ENCODE measurements at regions of chr10 and their contacts with region 1.

Region 1: GRCh38 chr10:46556515-46557315 is at the start of gene GPRIN2:
- DNase-seq: no peak
- H3K4me3 ChIP-seq: peak within 1 kb of the TSS; percentile 18
- CTCF ChIP-seq: no peak

Region 2: GRCh38 chr10:46525177-46525823 is 31.4 kb before region 1 on chr10:
- CTCF ChIA-PET with region 1: no interaction called
- POLR2A ChIA-PET with region 1: no interaction called
- DNase-seq: peak; percentile 42
- H3K4me3 ChIP-seq: no peak overlapping the region
- CTCF ChIP-seq: no peak

Region 3: GRCh38 chr10:46544989-46545791 is 11.5 kb before region 1 on chr10:
- CTCF ChIA-PET with region 1: interaction called, 20 read pairs
- POLR2A ChIA-PET with region 1: no interaction called
- DNase-seq: no peak
- H3K4me3 ChIP-seq: no peak overlapping the region
- CTCF ChIP-seq: peak; percentile 43

Region 4: DNA sequence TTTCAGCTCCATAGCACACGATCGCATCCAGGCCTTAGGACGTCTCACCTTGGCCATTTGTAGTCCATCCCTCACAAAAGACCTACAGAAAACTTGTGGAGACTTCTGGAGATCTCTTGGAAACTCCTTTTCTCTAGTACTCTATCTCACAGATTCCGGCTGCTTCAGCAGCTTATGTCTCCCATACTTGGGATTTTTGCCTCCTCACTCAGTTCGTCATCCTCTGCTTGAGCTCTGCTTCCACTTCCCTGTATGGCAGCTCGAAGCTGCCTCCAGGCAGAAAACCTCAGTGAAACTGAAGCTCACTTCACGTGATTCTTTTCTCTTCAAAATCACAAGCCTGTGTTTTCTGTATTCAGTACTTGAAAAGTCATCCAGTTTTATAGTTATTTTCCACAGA is 564.6 kb after region 1 on chr10:
- CTCF ChIA-PET with region 1: no interaction called
- POLR2A ChIA-PET with region 1: no interaction called
- DNase-seq: peak; percentile 12
- H3K4me3 ChIP-seq: no peak overlapping the region
- CTCF ChIP-seq: no peak

Measured in AG04449 (cell line).